GM12878 (cell line): ENCODE measurements at regions of chr18 and their contacts with region 1.

Region 1: DNA sequence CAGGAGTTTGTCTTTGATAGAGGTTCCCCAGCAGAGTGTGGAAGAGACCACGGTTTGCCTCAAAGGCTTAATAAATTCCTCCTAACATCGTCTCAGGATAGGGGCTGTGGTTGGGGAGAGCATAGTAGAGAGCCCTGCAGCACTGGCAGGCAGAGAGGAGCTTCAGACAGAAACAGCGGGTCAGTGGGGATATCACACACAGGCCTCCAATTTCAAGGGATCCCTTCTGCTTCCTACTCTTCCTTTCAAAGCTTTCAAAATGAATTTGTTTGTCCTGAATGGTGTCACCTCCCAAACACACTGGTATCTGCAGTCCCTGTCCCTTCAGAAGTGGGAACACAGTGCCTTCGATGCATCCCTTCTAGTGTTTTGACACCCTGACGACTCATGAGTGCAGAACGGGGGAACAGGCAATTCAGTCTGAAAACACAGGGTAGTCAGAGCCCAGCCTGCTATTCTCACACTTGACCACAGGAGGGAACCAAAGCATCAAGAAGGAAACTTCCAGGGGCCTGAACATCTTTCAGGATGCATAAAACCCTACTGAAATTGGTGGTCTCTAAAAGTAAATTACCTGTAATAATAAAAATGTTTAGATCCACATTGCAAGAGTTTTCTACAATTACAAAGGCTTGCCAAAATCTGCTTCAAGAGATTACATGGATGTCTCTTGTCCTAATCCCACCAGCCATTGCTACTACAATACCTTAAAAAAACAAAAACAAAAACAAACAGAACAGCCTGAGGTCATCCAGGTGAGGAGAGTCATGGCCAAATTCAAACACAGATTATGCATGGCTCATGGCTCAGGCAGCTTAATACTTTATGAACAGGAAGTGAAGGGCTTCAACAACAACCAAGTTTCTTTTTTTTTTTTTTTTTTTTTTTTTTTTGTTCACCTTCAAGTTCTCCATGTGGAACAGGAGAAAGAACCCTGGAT is 49.8 kb downstream of the SLC14A2 start:
- DNase-seq: no peak
- ATAC-seq: peak; percentile 85
- H3K4me3 ChIP-seq: no peak overlapping the region
- H3K27ac ChIP-seq: no peak overlapping the region
- H3K4me1 ChIP-seq: peaks cover 18% of the 10 kb centered on the region
- H3K27me3 ChIP-seq: no peaks in the 10 kb centered on the region
- CTCF ChIP-seq: peak; percentile 92 to 95 (median 95)
- EP300 ChIP-seq: no peak
- POLR2A ChIP-seq: no peak
- RAD21 ChIP-seq: peak; percentile 97

Region 2: DNA sequence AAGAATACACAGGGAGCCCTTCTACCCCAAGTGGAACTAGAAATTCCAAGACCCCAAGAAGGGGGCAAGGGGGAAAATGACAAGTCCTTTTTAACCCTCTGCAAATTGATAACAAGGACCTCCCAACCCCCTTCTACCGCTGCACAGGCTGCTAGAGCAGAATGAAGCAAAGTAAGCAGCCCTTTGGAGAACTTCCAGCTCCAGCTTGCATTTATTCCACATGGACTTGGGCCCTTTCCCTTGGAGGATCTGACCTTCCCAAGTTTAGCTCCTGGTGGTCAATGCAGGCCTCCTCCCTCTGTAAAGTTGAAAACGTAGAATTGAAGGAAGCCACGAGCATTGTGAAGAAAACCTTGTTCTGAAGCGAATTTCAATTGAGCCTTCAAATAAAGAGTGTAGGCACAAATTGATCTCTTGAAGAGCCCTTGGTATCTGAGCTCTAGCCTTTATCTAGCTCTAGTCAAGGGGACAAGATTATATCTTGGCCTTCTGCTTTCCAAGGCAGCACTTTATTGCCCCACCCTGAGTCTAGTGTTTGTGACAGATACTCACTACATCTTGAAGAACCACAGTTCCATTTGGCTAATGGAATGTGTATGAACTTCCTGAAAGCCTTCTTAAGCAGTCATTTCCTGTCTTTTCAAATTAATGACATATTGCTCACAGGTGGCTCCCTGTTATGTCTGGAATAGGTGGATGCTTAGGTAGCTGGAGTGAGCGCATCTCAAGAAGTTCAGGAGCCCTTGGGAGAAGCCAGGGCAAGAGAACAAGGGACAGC is 12.6 kb before region 1 on chr18:
- CTCF ChIA-PET with region 1: interaction called, 6 read pairs
- POLR2A ChIA-PET with region 1: no interaction called
- RAD21 ChIA-PET with region 1: interaction called, 3 read pairs
- SMC1A ChIA-PET with region 1: interaction called, 28 read pairs
- in situ Hi-C with region 1: no loop called
- intact Hi-C with region 1: no loop called
- DNase-seq: no peak
- ATAC-seq: no peak
- H3K4me3 ChIP-seq: no peak overlapping the region
- H3K27ac ChIP-seq: no peak overlapping the region
- H3K4me1 ChIP-seq: no peaks in the 10 kb centered on the region
- H3K27me3 ChIP-seq: no peaks in the 10 kb centered on the region; a peak in 1 of 4 replicates
- CTCF ChIP-seq: no peak
- EP300 ChIP-seq: no peak
- POLR2A ChIP-seq: no peak
- RAD21 ChIP-seq: no peak

Region 3: DNA sequence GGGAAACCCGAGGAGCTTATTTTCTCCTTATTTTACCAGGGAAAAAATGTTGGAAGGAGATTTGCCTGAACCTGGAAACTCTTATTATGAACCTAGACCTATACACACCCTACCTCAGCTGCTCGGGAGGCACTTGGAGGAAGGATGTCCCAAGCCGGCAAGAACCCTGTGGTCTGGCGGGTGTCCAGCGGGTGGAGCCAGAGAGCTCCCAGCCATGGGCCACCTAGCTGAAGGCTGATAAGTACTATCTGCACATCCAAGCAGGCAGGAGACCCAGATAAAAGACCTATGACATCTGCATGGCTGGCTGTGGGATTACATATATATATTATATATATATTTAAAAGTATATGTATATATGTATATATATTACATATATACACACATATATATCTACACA is 57.8 kb after region 1 on chr18:
- CTCF ChIA-PET with region 1: interaction called, 93 read pairs
- POLR2A ChIA-PET with region 1: no interaction called
- RAD21 ChIA-PET with region 1: interaction called, 21 read pairs
- SMC1A ChIA-PET with region 1: interaction called, 9 read pairs
- in situ Hi-C with region 1: no loop called
- intact Hi-C with region 1: loop called (anchors 1 kb)
- DNase-seq: peak; percentile 27
- ATAC-seq: peak; percentile 100
- H3K4me3 ChIP-seq: no peak overlapping the region
- H3K27ac ChIP-seq: no peak overlapping the region
- H3K4me1 ChIP-seq: no peaks in the 10 kb centered on the region
- H3K27me3 ChIP-seq: no peaks in the 10 kb centered on the region
- CTCF ChIP-seq: peak; percentile 74 to 93 (median 77)
- EP300 ChIP-seq: no peak
- POLR2A ChIP-seq: no peak
- RAD21 ChIP-seq: peak; percentile 78

Region 4: DNA sequence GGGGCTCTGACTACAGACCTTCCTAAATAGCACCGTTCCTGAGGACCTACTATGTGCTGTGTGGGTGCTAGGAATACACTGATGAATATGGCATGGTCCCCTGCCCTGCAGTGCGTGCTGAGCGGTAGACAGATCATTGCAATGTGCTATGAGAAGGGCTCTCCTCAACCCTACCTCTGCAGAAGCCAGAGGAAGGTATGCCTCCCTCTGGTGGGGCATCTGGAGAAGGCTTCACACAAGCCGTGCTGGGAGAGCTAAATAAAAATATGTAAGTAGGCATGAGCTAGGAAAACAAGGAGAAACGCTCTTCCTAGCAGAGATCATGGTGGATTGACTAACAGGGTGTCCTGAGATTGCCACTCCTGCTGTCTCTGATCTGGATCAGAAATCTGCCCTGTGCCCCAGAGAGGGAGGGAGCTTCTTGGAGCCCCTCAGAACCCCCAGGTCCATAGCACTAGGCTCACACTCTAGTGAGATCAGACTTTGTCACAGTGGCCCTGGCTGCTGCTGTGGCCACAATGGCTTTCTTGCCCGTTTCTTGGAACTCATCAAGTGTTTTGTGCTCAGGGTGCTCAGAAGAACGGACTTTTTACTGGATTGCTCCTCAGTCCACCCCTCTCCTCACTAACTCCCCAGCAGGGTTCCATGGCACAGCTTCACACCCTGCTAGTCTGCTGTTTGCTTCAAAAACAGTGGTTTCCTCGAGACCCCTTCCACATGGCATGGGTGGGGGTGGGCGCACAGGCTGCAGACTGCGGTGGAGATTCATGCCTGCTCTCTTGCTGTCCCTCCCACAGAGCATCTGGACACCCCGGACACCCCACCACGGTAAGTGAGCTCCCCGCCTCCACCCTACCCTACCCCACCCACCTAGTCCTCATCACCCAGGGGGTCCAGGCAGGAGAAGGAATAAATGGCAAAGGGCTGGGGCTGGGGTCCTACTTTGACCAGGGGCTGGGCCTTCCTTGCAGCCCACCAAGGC is 174.6 kb after region 1 on chr18:
- CTCF ChIA-PET with region 1: interaction called, 10 read pairs
- POLR2A ChIA-PET with region 1: no interaction called
- RAD21 ChIA-PET with region 1: interaction called, 3 read pairs
- SMC1A ChIA-PET with region 1: no interaction called
- in situ Hi-C with region 1: no loop called
- intact Hi-C with region 1: no loop called
- DNase-seq: no peak
- ATAC-seq: peak; percentile 70
- H3K4me3 ChIP-seq: no peak overlapping the region
- H3K27ac ChIP-seq: no peak overlapping the region
- H3K4me1 ChIP-seq: no peaks in the 10 kb centered on the region
- H3K27me3 ChIP-seq: peaks cover 0 to 4% of the 10 kb centered on the region in 2 experiments; a peak in 1 of 4 replicates
- CTCF ChIP-seq: peak; percentile 31 to 53 (median 44); a peak in 4 of 6 replicates
- EP300 ChIP-seq: no peak
- POLR2A ChIP-seq: no peak
- RAD21 ChIP-seq: peak; percentile 31

Region 5: GRCh38 chr18:45910405-45911023 is 245.4 kb after region 1 on chr18:
- CTCF ChIA-PET with region 1: interaction called, 47 read pairs
- POLR2A ChIA-PET with region 1: no interaction called
- RAD21 ChIA-PET with region 1: interaction called, 15 read pairs
- SMC1A ChIA-PET with region 1: interaction called, 7 read pairs
- in situ Hi-C with region 1: no loop called
- intact Hi-C with region 1: loop called (anchors 1 kb)
- DNase-seq: peak; percentile 2
- ATAC-seq: peak; percentile 95
- H3K4me3 ChIP-seq: no peak overlapping the region
- H3K27ac ChIP-seq: no peak overlapping the region
- H3K4me1 ChIP-seq: no peaks in the 10 kb centered on the region
- H3K27me3 ChIP-seq: no peaks in the 10 kb centered on the region
- CTCF ChIP-seq: peak; percentile 71 to 81 (median 74)
- EP300 ChIP-seq: no peak
- POLR2A ChIP-seq: no peak
- RAD21 ChIP-seq: peak; percentile 66

Region 6: GRCh38 chr18:46073474-46074331 is 408.6 kb after region 1 on chr18:
- CTCF ChIA-PET with region 1: interaction called, 78 read pairs
- POLR2A ChIA-PET with region 1: no interaction called
- RAD21 ChIA-PET with region 1: interaction called, 39 read pairs
- SMC1A ChIA-PET with region 1: interaction called, 36 read pairs
- in situ Hi-C with region 1: no loop called
- intact Hi-C with region 1: loop called (anchors 2 kb)
- DNase-seq: no peak
- ATAC-seq: peak; percentile 63
- H3K4me3 ChIP-seq: no peak overlapping the region
- H3K27ac ChIP-seq: no peak overlapping the region
- H3K4me1 ChIP-seq: peaks cover 14% of the 10 kb centered on the region
- H3K27me3 ChIP-seq: no peaks in the 10 kb centered on the region; a peak in 1 of 4 replicates
- CTCF ChIP-seq: peak; percentile 44 to 68 (median 51); a peak in 5 of 6 replicates
- EP300 ChIP-seq: no peak
- POLR2A ChIP-seq: no peak
- RAD21 ChIP-seq: peak; percentile 91